ENCODE measurements at regions of chr6 and their contacts with region 1.

Region 1: GRCh38 chr6:11144393-11144851 is 32.9 kb upstream of the ERVFRD-1 start:
- DNase-seq: peak; percentile 69 to 82 (median 76)
- H3K4me3 ChIP-seq: no peak overlapping the region
- H3K4me3 Mint-ChIP-seq: peak overlapping the region in 1 of 2 donors; percentile 33
- H3K27ac ChIP-seq: peak overlapping the region in 1 of 2 donors; percentile 81
- H3K27ac Mint-ChIP-seq: peak overlapping the region; percentile 69 to 98 (median 95)
- H3K4me1 ChIP-seq: peaks cover 30 to 33% of the 10 kb centered on the region in 2 donors
- H3K4me1 Mint-ChIP-seq: peaks cover 35% of the 10 kb centered on the region
- H3K27me3 ChIP-seq: no peaks in the 10 kb centered on the region
- H3K27me3 Mint-ChIP-seq: peaks cover 0 to 2% (median 0%) of the 10 kb centered on the region in 3 donors
- CTCF ChIP-seq: peak; percentile 96

Region 2: DNA sequence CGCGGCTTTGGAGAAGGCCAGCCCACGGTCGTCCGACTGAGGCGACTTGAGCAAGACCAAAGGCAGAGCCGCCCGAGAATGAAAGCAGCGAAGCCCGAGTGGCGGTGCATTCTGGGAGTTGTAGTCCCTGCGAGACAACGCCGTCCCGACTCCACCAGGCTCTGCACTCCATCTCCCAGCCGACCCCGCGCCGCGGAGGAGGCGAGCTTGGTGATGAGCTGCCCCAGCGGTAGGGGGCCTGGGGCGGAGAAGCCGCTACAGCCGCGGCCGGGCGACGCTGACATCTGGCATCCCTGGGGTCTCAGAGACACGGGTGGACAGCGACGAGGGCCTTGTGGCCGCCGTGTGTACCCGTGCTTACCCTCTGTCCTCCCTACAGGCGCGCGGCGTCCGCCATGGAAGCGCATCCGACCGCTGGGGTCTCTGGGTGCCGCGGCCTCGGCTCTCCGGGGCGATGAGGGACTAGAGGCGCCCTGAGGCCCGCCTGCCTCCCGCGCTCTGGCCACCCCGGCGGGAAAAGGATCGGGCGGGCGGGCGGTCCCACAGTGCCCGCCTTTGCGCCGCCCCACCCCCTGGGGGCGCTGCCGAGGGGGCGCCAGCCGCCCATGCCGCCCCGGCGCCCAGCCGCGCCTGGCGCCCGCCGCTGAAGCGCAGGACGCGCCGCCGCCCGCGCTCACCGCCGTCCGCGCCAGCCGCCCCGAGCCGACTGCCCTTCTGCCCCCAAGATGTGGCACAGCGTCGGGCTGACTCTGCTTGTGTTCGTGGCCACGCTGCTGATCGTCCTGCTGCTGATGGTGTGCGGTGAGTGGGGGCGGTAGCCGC is 50.6 kb before region 1 on chr6 and contains the start of gene SMIM13:
- intact Hi-C with region 1: loop called in 1 of 2 experiments (anchors 5 kb)
- DNase-seq: peak; percentile 94 to 98 (median 96)
- H3K4me3 ChIP-seq: peak within 1 kb of the TSS; percentile 88 to 94 (median 91)
- H3K4me3 Mint-ChIP-seq: peak within 1 kb of the TSS; percentile 98
- H3K27ac ChIP-seq: peak within 1 kb of the TSS; percentile 84 to 92
- H3K27ac Mint-ChIP-seq: peak within 1 kb of the TSS; percentile 91 to 96 (median 95)
- H3K4me1 ChIP-seq: peaks cover 29% of the 10 kb centered on the region in 2 donors
- H3K4me1 Mint-ChIP-seq: peaks cover 36% of the 10 kb centered on the region
- H3K27me3 ChIP-seq: no peaks in the 10 kb centered on the region
- H3K27me3 Mint-ChIP-seq: peaks cover 0 to 2% (median 0%) of the 10 kb centered on the region in 3 donors
- CTCF ChIP-seq: peak; percentile 74
- polyA plus RNA-seq, gene SMIM13: 1.4 to 3.4 (median 2.4) TPM

Region 3: GRCh38 chr6:11161031-11161966 is 16.9 kb after region 1 on chr6:
- intact Hi-C with region 1: no loop called
- DNase-seq: no peak
- H3K4me3 ChIP-seq: no peak overlapping the region
- H3K4me3 Mint-ChIP-seq: no peak overlapping the region
- H3K27ac ChIP-seq: no peak overlapping the region
- H3K27ac Mint-ChIP-seq: no peak overlapping the region
- H3K4me1 ChIP-seq: peaks cover 0 to 9% of the 10 kb centered on the region in 2 donors
- H3K4me1 Mint-ChIP-seq: peaks cover 8% of the 10 kb centered on the region
- H3K27me3 ChIP-seq: no peaks in the 10 kb centered on the region
- H3K27me3 Mint-ChIP-seq: peaks cover 0 to 2% (median 2%) of the 10 kb centered on the region in 3 donors
- CTCF ChIP-seq: no peak

Region 4: DNA sequence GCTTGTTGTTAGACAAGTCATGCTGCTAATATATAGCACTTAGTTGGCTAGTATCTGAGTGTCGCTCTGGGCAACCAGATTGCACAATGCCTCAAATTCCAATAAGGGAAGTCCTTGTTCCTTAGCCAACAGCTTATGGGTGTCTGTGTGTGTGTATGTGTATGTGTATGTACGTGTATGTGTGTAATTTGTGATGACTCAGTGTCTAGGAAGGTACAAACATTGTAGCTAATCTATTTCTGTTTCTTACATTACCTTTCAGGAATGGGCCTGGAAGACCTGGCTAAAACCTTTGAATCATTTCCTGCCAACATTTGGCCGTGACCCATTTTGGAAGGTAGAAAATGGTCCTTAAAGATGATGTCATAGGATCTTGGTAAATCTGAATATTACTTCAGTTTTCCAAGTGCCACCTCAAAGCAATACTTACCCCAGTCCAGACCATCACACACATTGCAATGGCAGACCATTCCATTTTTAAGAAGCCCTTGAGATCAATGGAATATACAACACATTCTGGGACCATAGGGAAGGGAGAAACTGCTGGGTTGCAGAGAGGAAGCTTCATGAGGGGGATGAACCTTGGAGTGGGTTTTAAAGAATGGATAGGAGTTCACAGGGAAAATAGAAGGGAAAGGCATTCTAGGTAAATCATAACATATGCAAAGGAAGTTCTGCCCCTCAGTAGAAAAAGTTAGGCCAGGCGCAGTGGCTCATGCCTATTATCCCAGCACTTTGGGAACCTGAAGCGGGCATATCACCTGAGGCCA is 63.0 kb after region 1 on chr6:
- intact Hi-C with region 1: loop called in 1 of 2 experiments (anchors 2 kb)
- DNase-seq: peak; percentile 96 to 100 (median 99)
- H3K4me3 ChIP-seq: peak overlapping the region in 1 of 3 experiments; percentile 47
- H3K4me3 Mint-ChIP-seq: peak overlapping the region; percentile 9 to 82
- H3K27ac ChIP-seq: peak overlapping the region; percentile 67 to 99
- H3K27ac Mint-ChIP-seq: peak overlapping the region; percentile 97 to 99 (median 99)
- H3K4me1 ChIP-seq: peaks cover 49 to 51% of the 10 kb centered on the region in 2 donors
- H3K4me1 Mint-ChIP-seq: peaks cover 50% of the 10 kb centered on the region
- H3K27me3 ChIP-seq: no peaks in the 10 kb centered on the region
- H3K27me3 Mint-ChIP-seq: peaks cover 0 to 4% (median 0%) of the 10 kb centered on the region in 3 donors
- CTCF ChIP-seq: no peak

Region 5: GRCh38 chr6:11537229-11538051 is 393.0 kb after region 1 on chr6 and contains the start of gene TMEM170B:
- intact Hi-C with region 1: no loop called
- DNase-seq: peak; percentile 94 to 97 (median 96)
- H3K4me3 ChIP-seq: peak within 1 kb of the TSS; percentile 94 to 100 (median 95)
- H3K4me3 Mint-ChIP-seq: peak within 1 kb of the TSS; percentile 88 to 97
- H3K27ac ChIP-seq: peak within 1 kb of the TSS; percentile 91 to 93
- H3K27ac Mint-ChIP-seq: peak within 1 kb of the TSS; percentile 95 to 99 (median 97)
- H3K4me1 ChIP-seq: peaks cover 41 to 50% of the 10 kb centered on the region in 2 donors
- H3K4me1 Mint-ChIP-seq: peaks cover 46% of the 10 kb centered on the region
- H3K27me3 ChIP-seq: no peaks in the 10 kb centered on the region
- H3K27me3 Mint-ChIP-seq: peaks cover 0 to 2% (median 0%) of the 10 kb centered on the region in 3 donors
- CTCF ChIP-seq: no peak
- polyA plus RNA-seq, gene TMEM170B: 11.7 to 33.4 (median 19.7) TPM